ENCODE measurements at regions of chr14 and their contacts with region 1.

Region 1: DNA sequence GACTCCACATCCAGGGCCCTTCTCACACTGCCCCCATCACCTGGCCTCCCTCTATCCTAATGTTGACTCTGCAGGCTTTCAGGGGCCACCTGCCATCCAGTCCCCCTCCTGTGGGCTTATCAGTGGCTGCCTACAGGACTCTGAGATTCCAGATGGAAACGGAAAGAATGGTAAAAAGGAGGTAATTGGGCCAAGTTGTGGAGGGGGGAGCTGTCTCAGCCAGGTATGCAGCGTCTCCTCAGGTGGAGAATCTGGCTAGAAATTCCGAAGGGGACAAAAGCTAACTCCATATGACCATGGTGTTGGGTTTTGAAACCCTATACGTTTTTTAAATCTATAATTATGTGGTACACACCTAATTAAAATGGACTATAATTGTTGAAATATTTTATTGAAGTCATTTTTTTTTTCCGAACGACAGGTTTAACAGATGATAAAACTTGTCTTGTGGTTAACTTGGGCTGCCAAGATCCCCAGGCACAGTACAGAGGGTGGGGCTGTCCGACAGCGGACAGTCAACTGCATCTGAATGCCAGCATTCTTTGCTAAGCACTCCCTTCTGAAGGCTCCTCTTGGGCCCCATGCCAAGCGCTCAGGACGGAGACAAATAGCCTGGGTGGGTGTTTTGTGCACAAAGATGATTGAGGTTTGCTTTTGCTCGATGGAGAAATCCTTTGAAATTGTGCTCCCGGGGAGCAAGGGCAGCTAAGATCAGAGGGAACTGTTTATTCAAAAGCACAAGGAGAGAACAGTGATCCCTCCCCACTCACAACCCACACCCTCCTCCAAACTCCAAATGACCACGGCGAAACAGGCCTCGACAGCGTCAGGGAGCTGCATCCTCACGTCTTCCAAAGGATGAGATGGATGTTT is 365.6 kb downstream of the BCL11B start:
- DNase-seq: peak; percentile 68 to 73
- H3K4me3 ChIP-seq: no peak overlapping the region
- H3K27ac ChIP-seq: peak overlapping the region in 1 of 3 donors; percentile 7
- H3K4me1 ChIP-seq: peaks cover 10 to 26% of the 10 kb centered on the region in 2 donors
- H3K27me3 ChIP-seq: no peaks in the 10 kb centered on the region
- CTCF ChIP-seq: no peak
- POLR2A ChIP-seq: no peak

Region 2: GRCh38 chr14:98692857-98693256 is 213.5 kb before region 1 on chr14:
- intact Hi-C with region 1: loop called (anchors 10 kb)
- DNase-seq: peak; percentile 53 to 56
- H3K4me3 ChIP-seq: no peak overlapping the region
- H3K27ac ChIP-seq: no peak overlapping the region
- H3K4me1 ChIP-seq: peaks cover 0 to 6% of the 10 kb centered on the region in 2 donors
- H3K27me3 ChIP-seq: no peaks in the 10 kb centered on the region
- CTCF ChIP-seq: no peak
- POLR2A ChIP-seq: no peak

Region 3: GRCh38 chr14:99230208-99231151 is 324.1 kb after region 1 on chr14:
- intact Hi-C with region 1: loop called (anchors 10 kb)
- DNase-seq: peak; percentile 80 to 86
- H3K4me3 ChIP-seq: peak overlapping the region in 1 of 3 donors; percentile 36
- H3K27ac ChIP-seq: peak overlapping the region; percentile 58 to 77 (median 69)
- H3K4me1 ChIP-seq: peaks cover 13 to 33% of the 10 kb centered on the region in 2 donors
- H3K27me3 ChIP-seq: no peaks in the 10 kb centered on the region
- CTCF ChIP-seq: peak in 4 of 6 experiments; percentile 19 to 73 (median 48)
- POLR2A ChIP-seq: no peak

Region 4: DNA sequence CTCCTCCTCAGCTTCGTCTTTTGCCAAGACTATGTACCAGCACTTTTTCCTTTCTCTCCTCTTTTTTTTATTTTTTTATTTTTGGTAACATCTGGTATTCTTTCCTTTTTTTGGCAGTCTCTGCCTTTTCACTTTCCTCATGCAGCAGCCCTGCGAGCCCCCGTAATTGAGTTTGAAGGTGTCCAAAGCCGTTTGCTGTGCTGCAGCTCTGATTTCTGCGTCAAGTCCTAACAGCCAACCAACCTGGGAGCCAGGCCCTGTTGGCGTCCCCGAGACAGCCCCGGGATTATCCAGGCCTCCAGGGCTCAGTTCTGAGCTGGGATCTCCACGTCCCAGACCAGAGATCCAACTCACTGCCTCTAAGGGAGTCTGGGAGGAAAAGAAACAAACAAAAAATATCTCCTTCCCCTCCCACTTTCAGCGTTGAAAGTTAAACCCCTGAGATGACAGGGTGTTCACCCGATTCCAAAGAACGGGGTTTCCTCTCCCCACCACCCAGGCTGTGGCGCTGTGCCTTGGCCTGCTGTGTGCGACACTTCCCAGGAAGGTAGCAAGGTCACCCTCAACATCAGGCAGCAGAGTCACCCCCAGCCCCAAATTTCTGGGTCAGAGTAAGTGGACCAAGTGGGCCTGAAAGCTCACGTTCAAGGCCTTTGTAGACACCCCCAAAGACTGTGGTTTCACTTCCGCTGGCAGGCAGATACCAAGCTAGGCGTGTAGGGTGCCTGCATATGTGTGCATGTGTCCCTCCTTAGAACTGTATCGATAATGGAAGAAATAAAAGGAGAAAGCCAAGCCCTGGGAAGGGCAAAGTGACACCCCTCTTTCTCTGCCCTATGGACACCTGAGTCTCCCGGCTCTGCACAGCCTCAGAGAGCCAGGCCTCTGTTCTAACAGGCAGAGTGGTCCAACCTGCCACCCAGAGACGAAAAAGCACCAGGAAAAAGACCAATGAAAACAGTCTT is 354.5 kb after region 1 on chr14:
- intact Hi-C with region 1: no loop called
- DNase-seq: no peak
- H3K4me3 ChIP-seq: no peak overlapping the region
- H3K27ac ChIP-seq: no peak overlapping the region
- H3K4me1 ChIP-seq: peaks cover 0 to 11% of the 10 kb centered on the region in 2 donors
- H3K27me3 ChIP-seq: no peaks in the 10 kb centered on the region
- CTCF ChIP-seq: no peak
- POLR2A ChIP-seq: no peak